Naive thymus-derived CD4-positive, alpha-beta T cell (primary cell): ENCODE measurements at regions of chr9 and their contacts with region 1.

Region 1: GRCh38 chr9:130107234-130107861 is 53.6 kb downstream of the GPR107 start:
- DNase-seq: peak; percentile 61 to 84 (median 75)
- ATAC-seq: peak; percentile 91
- H3K4me3 ChIP-seq: no peak overlapping the region
- H3K4me3 Mint-ChIP-seq: no peak overlapping the region
- H3K27ac ChIP-seq: no peak overlapping the region
- H3K27ac Mint-ChIP-seq: peak overlapping the region in 3 of 9 donors; percentile 42 to 47 (median 42)
- H3K4me1 ChIP-seq: peaks cover 3 to 9% of the 10 kb centered on the region in 2 donors
- H3K4me1 Mint-ChIP-seq: peaks cover 8 to 29% (median 19%) of the 10 kb centered on the region in 7 donors
- H3K27me3 ChIP-seq: no peaks in the 10 kb centered on the region
- H3K27me3 Mint-ChIP-seq: no peaks in the 10 kb centered on the region

Region 2: DNA sequence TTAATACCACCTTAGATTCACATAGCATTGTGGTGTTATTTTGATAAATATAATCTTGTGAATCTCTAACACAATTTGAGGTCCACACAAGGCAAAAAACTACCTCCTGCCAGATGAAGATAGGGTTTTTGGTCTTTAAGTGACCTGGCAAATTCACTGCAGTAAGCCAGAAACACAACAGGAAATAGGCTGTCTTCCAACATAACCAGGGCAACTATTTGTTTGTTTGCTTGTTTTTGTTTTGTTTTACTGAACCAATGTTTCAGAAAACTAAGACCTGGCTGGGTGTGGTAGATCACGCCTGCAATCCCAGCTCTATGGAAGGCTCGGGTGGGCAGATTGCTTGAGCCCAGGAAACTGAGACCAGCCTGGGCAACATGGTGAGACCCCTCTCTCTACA is 176.6 kb before region 1 on chr9:
- CTCF ChIA-PET with region 1: no interaction called
- POLR2A ChIA-PET with region 1: no interaction called
- intact Hi-C with region 1: no loop called
- DNase-seq: no peak
- ATAC-seq: peak; percentile 60
- H3K4me3 ChIP-seq: no peak overlapping the region
- H3K4me3 Mint-ChIP-seq: peak overlapping the region in 2 of 10 donors; percentile 8 to 68
- H3K27ac ChIP-seq: peak overlapping the region; percentile 21
- H3K27ac Mint-ChIP-seq: peak overlapping the region in 6 of 9 donors; percentile 17 to 95 (median 58)
- H3K4me1 ChIP-seq: peaks cover 20 to 35% of the 10 kb centered on the region in 2 donors
- H3K4me1 Mint-ChIP-seq: peaks cover 31 to 60% (median 48%) of the 10 kb centered on the region in 7 donors
- H3K27me3 ChIP-seq: no peaks in the 10 kb centered on the region
- H3K27me3 Mint-ChIP-seq: no peaks in the 10 kb centered on the region

Region 3: GRCh38 chr9:130235897-130236668 is 128.7 kb after region 1 on chr9:
- CTCF ChIA-PET with region 1: interaction called, 50 read pairs
- POLR2A ChIA-PET with region 1: interaction called, 4 read pairs
- intact Hi-C with region 1: loop called (anchors 1 kb)
- DNase-seq: peak; percentile 41 to 79 (median 63)
- ATAC-seq: peak; percentile 79
- H3K4me3 ChIP-seq: no peak overlapping the region
- H3K4me3 Mint-ChIP-seq: peak overlapping the region in 7 of 10 donors; percentile 24 to 75 (median 54)
- H3K27ac ChIP-seq: no peak overlapping the region
- H3K27ac Mint-ChIP-seq: peak overlapping the region in 1 of 9 donors; percentile 43
- H3K4me1 ChIP-seq: peaks cover 7 to 11% of the 10 kb centered on the region in 2 donors
- H3K4me1 Mint-ChIP-seq: peaks cover 0 to 25% (median 15%) of the 10 kb centered on the region in 7 donors
- H3K27me3 ChIP-seq: no peaks in the 10 kb centered on the region
- H3K27me3 Mint-ChIP-seq: peaks cover 0 to 2% (median 0%) of the 10 kb centered on the region in 5 donors

Region 4: DNA sequence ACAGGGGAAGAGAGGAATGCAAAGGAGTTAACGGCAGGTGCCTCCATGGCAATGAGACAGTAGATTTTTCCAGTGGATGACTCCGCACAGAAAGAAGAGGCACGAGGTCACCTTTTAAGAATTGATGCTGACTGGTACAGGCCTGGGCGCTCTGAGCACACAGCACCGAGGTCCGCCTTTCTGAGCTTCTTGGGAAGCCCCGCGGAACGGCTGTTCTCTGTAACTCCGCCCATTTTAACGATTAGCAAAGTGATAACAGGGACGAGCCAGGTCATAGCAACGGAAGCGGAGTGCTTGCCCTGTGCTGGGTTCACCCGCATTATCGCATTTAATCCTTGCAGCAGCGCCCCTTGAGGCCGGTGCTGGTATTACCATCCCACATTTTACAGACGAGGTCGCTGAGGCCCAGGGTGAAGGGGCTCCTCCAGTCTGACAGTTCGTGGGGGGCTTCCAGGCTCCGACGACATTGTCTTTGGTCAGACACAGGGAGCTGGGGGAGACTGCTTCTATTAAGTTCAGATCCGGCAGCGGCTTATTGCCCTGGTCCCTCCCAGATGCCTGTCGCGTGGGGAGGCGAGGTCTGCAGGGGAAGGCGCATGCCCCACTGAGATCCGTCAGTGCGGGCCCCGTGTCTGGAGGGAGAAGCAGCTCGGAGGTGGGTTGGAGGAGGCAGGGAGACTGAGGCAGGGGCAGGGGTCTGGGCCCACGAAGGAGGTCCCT is 135.8 kb after region 1 on chr9:
- CTCF ChIA-PET with region 1: interaction called, 50 read pairs
- POLR2A ChIA-PET with region 1: no interaction called
- intact Hi-C with region 1: no loop called
- DNase-seq: peak; percentile 42 to 81 (median 68)
- ATAC-seq: peak; percentile 91
- H3K4me3 ChIP-seq: peak overlapping the region; percentile 44
- H3K4me3 Mint-ChIP-seq: peak overlapping the region; percentile 11 to 83 (median 58)
- H3K27ac ChIP-seq: no peak overlapping the region
- H3K27ac Mint-ChIP-seq: peak overlapping the region in 1 of 9 donors; percentile 26
- H3K4me1 ChIP-seq: peaks cover 7 to 16% of the 10 kb centered on the region in 2 donors
- H3K4me1 Mint-ChIP-seq: peaks cover 8 to 32% (median 21%) of the 10 kb centered on the region in 7 donors
- H3K27me3 ChIP-seq: no peaks in the 10 kb centered on the region
- H3K27me3 Mint-ChIP-seq: no peaks in the 10 kb centered on the region

Region 5: GRCh38 chr9:130343445-130343918 is 236.1 kb after region 1 on chr9:
- CTCF ChIA-PET with region 1: no interaction called
- POLR2A ChIA-PET with region 1: no interaction called
- intact Hi-C with region 1: loop called in 1 of 2 experiments (anchors 5 kb)
- DNase-seq: peak in 3 of 9 donors; percentile 8 to 38 (median 15)
- ATAC-seq: no peak
- H3K4me3 ChIP-seq: no peak overlapping the region
- H3K4me3 Mint-ChIP-seq: no peak overlapping the region
- H3K27ac ChIP-seq: no peak overlapping the region
- H3K27ac Mint-ChIP-seq: no peak overlapping the region
- H3K4me1 ChIP-seq: no peaks in the 10 kb centered on the region
- H3K4me1 Mint-ChIP-seq: peaks cover 0 to 3% (median 0%) of the 10 kb centered on the region in 7 donors
- H3K27me3 ChIP-seq: no peaks in the 10 kb centered on the region
- H3K27me3 Mint-ChIP-seq: no peaks in the 10 kb centered on the region

Region 6: GRCh38 chr9:130354806-130355205 is 247.5 kb after region 1 on chr9:
- CTCF ChIA-PET with region 1: no interaction called
- POLR2A ChIA-PET with region 1: no interaction called
- intact Hi-C with region 1: no loop called
- DNase-seq: no peak
- ATAC-seq: no peak
- H3K4me3 ChIP-seq: no peak overlapping the region
- H3K4me3 Mint-ChIP-seq: no peak overlapping the region
- H3K27ac ChIP-seq: no peak overlapping the region
- H3K27ac Mint-ChIP-seq: no peak overlapping the region
- H3K4me1 ChIP-seq: no peaks in the 10 kb centered on the region
- H3K4me1 Mint-ChIP-seq: peaks cover 0 to 3% (median 0%) of the 10 kb centered on the region in 7 donors
- H3K27me3 ChIP-seq: no peaks in the 10 kb centered on the region
- H3K27me3 Mint-ChIP-seq: no peaks in the 10 kb centered on the region

Region 7: GRCh38 chr9:131160416-131161112 is 1053.2 kb after region 1 on chr9:
- CTCF ChIA-PET with region 1: no interaction called
- POLR2A ChIA-PET with region 1: no interaction called
- intact Hi-C with region 1: no loop called
- DNase-seq: no peak
- ATAC-seq: no peak
- H3K4me3 ChIP-seq: no peak overlapping the region
- H3K4me3 Mint-ChIP-seq: no peak overlapping the region
- H3K27ac ChIP-seq: no peak overlapping the region
- H3K27ac Mint-ChIP-seq: peak overlapping the region in 1 of 9 donors; percentile 47
- H3K4me1 ChIP-seq: no peaks in the 10 kb centered on the region
- H3K4me1 Mint-ChIP-seq: peaks cover under 1 to 7% (median 1%) of the 10 kb centered on the region in 7 donors
- H3K27me3 ChIP-seq: no peaks in the 10 kb centered on the region
- H3K27me3 Mint-ChIP-seq: no peaks in the 10 kb centered on the region